ENCODE measurements at regions of chr17 and their contacts with region 1.

Region 1: DNA sequence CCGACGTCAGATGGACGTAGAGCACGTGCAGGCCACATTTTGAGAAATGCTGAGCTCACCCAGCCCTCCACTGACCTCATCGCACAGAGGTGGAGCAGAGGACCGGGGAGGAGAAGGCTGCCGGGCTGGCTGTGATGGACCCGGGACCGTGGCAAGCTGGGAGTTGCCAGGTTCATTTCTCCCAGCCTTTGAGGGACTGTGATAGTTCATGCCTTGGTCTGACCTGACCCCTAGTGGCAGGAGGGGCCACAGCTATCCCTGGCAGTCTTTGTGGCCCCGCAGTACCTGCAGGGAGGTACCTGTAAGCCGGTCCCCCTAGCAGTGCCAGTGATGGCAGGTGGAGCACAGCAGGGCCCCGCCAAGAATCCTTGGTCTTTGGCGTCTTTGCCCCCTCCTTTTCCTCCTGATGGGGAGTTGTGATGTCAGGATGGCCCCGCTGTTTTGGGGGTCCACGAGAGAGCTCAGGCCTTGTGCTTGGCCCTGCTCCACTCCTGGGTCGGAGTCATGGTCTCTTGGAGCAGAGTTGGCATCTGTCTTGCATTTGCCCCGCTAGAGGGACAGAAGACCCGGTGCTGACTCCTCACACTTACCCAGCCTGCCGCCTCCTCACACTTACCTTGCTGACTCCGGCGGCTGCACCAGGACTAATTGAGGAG is 50.4 kb downstream of the OR1D5 start:
- DNase-seq: peak; percentile 86 to 88
- ATAC-seq: peak; percentile 93 to 97
- H3K4me3 ChIP-seq: no peak overlapping the region
- H3K27ac ChIP-seq: peak overlapping the region; percentile 37 to 58
- H3K4me1 ChIP-seq: 0 out of 3 replicates have a peak, but pooled peaks cover 4% of the 10 kb centered on the region
- CTCF ChIP-seq: peak; percentile 95
- EP300 ChIP-seq: no peak
- POLR2A ChIP-seq: no peak
- RAD21 ChIP-seq: peak; percentile 99

Region 2: GRCh38 chr17:2796164-2797125 is 216.6 kb before region 1 on chr17 and contains the start of gene RAP1GAP2:
- CTCF ChIA-PET with region 1: interaction called, 35 read pairs
- POLR2A ChIA-PET with region 1: no interaction called
- DNase-seq: no peak
- ATAC-seq: peak; percentile 20 to 62; a peak in 3 of 6 replicates
- H3K4me3 ChIP-seq: no peak within 1 kb of the TSS
- H3K27ac ChIP-seq: peak within 1 kb of the TSS in 1 of 2 experiments; percentile 37; a peak in 2 of 6 replicates
- H3K4me1 ChIP-seq: 0 out of 3 replicates have a peak, but pooled peaks cover 6% of the 10 kb centered on the region
- CTCF ChIP-seq: no peak
- EP300 ChIP-seq: no peak
- POLR2A ChIP-seq: no peak
- RAD21 ChIP-seq: no peak
- polyA plus RNA-seq, gene RAP1GAP2: 20.8 and 26.0 TPM in 2 replicates

Region 3: DNA sequence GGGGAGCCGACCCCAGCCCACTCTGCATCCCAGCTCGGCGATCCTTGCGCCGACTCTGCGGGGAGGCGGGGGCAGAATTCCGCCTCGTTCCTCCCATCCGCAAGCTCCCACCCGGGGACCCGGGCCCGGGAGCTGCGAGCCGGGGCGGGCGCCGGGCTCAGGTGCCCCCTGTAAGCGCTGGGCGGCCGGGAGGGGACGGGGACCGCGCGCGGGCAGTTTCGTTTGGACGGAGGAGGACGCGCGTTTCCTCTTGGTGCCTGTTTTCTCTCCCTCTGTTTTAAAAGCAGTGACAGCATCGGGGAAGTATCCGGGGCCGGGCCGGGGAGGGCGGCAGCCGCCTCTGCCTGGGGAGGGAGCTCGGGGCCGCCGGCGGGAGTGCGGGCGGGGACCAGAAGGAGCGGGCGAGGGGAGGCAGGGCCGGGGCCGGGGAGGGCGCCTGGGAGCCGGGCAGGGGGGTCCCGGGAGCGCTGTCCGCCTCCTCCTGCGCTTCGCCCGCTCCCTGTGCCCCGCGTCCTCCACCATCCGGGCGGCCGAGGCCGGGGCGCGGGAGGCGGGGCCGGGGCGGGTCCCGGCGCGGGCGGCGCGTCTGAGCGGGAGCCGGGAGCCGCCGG is 159.8 kb before region 1 on chr17:
- CTCF ChIA-PET with region 1: interaction called, 550 read pairs
- POLR2A ChIA-PET with region 1: interaction called, 9 read pairs
- DNase-seq: peak; percentile 63 to 73
- ATAC-seq: peak; percentile 57 to 72
- H3K4me3 ChIP-seq: peak overlapping the region; percentile 72
- H3K27ac ChIP-seq: peak overlapping the region; percentile 87 to 92
- H3K4me1 ChIP-seq: peaks cover 23% of the 10 kb centered on the region
- CTCF ChIP-seq: no peak
- EP300 ChIP-seq: no peak
- POLR2A ChIP-seq: no peak
- RAD21 ChIP-seq: 0 out of 5 replicates have a peak, but pooled peaks of 1 of the 2 experiments have one; percentile 15

Region 4: GRCh38 chr17:2929881-2930533 is 83.0 kb before region 1 on chr17:
- CTCF ChIA-PET with region 1: interaction called, 61 read pairs
- POLR2A ChIA-PET with region 1: no interaction called
- DNase-seq: peak; percentile 71 to 83
- ATAC-seq: peak; percentile 90 to 92
- H3K4me3 ChIP-seq: no peak overlapping the region
- H3K27ac ChIP-seq: peak overlapping the region; percentile 63 to 67; a peak in 5 of 6 replicates
- H3K4me1 ChIP-seq: peaks cover 32% of the 10 kb centered on the region
- CTCF ChIP-seq: peak; percentile 89
- EP300 ChIP-seq: no peak
- POLR2A ChIP-seq: no peak
- RAD21 ChIP-seq: peak; percentile 85 to 91

Region 5: DNA sequence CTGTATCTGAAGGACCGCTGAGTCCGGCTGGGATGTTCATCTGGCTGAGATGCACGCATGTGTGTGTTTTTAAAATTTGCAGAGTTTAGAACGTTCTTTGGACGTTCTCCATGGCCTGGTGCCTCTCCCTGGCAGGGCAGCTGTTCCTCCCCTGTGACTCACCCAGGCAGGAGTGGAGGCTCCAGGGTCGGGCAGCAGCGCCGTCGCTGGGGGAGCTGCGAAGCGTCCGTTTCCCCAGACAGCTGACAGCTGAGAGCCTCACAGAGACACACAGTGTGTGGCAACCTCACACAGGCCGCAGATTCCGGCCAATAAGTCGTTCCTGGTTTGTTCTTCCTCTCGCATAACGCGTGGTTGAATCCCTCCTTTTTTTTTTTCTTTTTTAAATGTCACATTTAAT is 30.2 kb before region 1 on chr17:
- CTCF ChIA-PET with region 1: interaction called, 16 read pairs
- POLR2A ChIA-PET with region 1: no interaction called
- DNase-seq: peak; percentile 77 to 89
- ATAC-seq: peak; percentile 98
- H3K4me3 ChIP-seq: no peak overlapping the region
- H3K27ac ChIP-seq: peak overlapping the region; percentile 54 to 63
- H3K4me1 ChIP-seq: peaks cover 12% of the 10 kb centered on the region
- CTCF ChIP-seq: peak; percentile 30; the same call in 2 of the 3 replicates
- EP300 ChIP-seq: no peak
- POLR2A ChIP-seq: no peak
- RAD21 ChIP-seq: peak; percentile 56 to 67